ENCODE measurements at regions of chr1 and their contacts with region 1.

Region 1: DNA sequence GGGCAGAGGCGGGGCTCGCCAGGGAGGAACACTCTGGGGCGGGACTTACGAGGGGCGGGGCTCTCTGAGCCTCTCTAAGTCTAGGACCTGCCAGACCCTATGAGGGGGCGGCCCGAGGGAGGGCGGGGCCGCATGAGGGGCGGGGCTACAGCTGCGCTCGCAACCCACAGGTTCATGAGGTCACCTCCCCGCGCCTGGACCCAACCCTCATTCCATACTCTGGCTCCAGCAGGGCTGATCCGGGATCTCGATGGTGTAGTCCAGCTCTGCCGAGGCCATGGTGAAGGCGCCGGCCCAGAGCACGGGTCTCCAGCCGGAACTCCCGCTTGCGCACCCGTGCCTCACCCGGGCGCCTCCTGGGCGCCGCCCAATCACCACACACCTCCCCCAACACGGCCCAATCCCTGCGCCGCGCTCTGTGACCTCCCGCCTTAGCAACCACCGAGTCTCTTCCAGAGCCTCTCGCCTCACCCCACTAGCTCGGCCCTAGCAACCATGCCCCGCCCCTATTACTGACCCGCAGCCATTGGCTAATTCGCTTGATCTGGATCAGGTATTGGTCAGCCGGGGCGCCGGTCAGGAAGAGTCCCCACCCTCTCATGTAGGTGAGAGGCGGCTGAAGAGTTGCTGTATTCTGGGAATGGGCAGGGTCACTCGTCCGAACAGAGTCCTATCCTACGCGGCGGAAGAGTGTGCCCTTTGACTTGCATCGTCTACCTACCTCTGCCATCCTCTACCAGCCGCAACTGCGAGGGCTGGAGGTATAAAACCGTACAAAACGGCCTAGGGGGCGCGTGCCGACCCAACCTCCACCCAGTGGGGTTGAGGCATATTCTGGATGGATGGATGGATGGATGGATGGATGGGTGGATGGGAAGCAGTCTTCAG is at the starts of genes ARMH1 and TMEM53:
- DNase-seq: peak; percentile 96 to 98 (median 97)
- H3K4me3 ChIP-seq: peak within 1 kb of the TSS; percentile 62 to 95
- H3K4me3 Mint-ChIP-seq: peak within 1 kb of the TSS; percentile 89 to 95 (median 90)
- H3K27ac ChIP-seq: peak within 1 kb of the TSS; percentile 74
- H3K27ac Mint-ChIP-seq: peak within 1 kb of the TSS; percentile 87 to 94 (median 93)
- H3K4me1 ChIP-seq: peaks cover 25% of the 10 kb centered on the region
- H3K4me1 Mint-ChIP-seq: peaks cover 11 to 31% (median 23%) of the 10 kb centered on the region in 4 donors
- H3K27me3 ChIP-seq: no peaks in the 10 kb centered on the region
- H3K27me3 Mint-ChIP-seq: no peaks in the 10 kb centered on the region
- total RNA-seq, gene ARMH1: 64.0 to 74.5 TPM
- total RNA-seq, gene TMEM53: 1.7 to 2.2 TPM

Region 2: DNA sequence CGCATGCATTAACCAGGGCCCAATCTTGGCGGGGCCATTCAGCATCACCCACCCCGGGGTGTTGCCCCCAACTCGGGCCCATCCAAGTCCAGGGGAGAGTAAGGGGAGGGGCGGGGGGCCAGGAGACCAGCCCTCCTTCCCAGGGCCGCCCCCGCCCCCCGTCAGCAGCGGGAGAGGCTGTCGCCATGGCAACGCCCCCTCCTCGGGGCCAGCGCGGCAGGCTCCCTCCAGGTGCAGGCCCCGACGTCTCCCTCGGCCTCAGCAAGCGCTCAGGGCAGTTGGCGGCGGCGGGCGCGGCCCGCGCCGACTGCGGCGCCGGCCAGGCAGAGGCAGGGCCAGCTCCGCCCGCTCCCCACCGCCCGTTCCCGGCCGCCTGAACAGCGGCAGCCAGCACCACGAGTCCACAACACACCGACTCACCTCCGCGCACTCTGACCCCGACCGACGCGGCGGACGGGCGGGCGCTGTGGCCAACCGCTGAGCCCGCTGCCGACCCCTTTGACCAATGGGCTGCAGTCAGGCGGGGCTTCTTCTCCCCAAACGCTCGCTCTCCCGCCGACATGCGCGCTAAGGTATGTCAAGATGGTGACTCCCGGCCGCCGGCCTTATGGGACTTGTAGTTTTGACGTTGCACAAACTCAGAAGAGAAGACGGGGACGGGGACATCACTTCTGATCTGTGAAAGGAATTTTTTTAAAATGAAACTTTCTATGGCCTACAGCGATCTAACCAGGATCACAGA is 319.3 kb before region 1 on chr1 and contains the start of gene ERI3:
- CTCF ChIA-PET with region 1: no interaction called
- POLR2A ChIA-PET with region 1: no interaction called
- intact Hi-C with region 1: loop called (anchors 1 kb)
- DNase-seq: peak; percentile 95 to 97 (median 96)
- H3K4me3 ChIP-seq: peak within 1 kb of the TSS; percentile 31 to 72
- H3K4me3 Mint-ChIP-seq: peak within 1 kb of the TSS; percentile 92 to 100 (median 96)
- H3K27ac ChIP-seq: peak within 1 kb of the TSS; percentile 70
- H3K27ac Mint-ChIP-seq: peak within 1 kb of the TSS; percentile 70 to 96 (median 95)
- H3K4me1 ChIP-seq: peaks cover 25% of the 10 kb centered on the region
- H3K4me1 Mint-ChIP-seq: peaks cover 12 to 37% (median 25%) of the 10 kb centered on the region in 4 donors
- H3K27me3 ChIP-seq: no peaks in the 10 kb centered on the region
- H3K27me3 Mint-ChIP-seq: no peaks in the 10 kb centered on the region
- total RNA-seq, gene ERI3: 26.4 to 29.6 TPM

Region 3: DNA sequence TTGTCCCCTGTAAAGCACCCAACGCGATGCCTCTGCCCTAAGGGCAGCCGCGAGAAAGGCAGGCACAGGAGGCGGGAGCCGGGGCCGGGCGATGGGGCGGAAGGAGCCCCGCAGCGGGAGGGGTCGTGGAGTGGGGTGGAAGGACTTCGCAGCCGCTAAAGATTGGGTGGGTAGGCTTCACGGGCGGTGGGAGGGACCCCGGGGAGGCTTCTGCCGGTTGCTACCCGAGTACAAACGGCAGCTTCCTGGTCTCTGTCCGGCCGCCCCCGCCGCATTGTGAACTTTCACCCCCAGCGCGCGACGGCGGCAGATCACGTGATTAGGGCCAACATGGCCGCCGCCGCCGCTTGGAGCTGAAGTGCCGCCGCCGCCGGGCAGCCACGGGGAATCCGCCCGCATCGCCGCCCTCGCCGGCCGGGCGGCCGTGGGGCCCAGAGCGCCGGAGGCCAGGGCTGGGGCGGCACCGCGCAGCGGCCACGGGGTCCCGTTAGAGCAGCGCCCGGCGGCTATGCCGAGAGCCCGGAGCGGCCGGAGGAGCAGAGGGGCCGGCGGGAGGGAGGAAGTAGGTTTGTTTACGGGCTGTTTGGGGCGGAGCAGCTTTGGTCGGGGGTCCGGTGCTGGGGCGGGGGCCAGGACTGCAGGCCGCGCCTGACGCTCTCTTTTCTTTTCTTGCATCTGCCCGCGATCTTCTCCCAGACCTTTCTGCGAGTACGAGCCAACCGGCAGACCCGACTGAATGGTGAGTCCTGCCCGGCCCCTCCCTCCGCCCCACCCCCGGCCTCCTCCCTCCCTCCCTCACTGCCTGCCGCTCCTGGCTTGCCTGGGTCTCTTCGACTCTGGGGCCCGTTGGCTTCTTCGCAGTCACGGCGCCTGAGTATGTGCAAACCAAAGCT is 42.5 kb before region 1 on chr1:
- CTCF ChIA-PET with region 1: no interaction called
- POLR2A ChIA-PET with region 1: interaction called, 64 read pairs
- intact Hi-C with region 1: loop called (anchors 1 kb)
- DNase-seq: peak; percentile 86 to 92 (median 88)
- H3K4me3 ChIP-seq: peak overlapping the region; percentile 38 to 65
- H3K4me3 Mint-ChIP-seq: peak overlapping the region; percentile 91 to 97 (median 93)
- H3K27ac ChIP-seq: peak overlapping the region; percentile 85
- H3K27ac Mint-ChIP-seq: peak overlapping the region; percentile 96 to 99 (median 97)
- H3K4me1 ChIP-seq: peaks cover 35% of the 10 kb centered on the region
- H3K4me1 Mint-ChIP-seq: peaks cover 27 to 50% (median 33%) of the 10 kb centered on the region in 4 donors
- H3K27me3 ChIP-seq: no peaks in the 10 kb centered on the region
- H3K27me3 Mint-ChIP-seq: no peaks in the 10 kb centered on the region

Region 4: DNA sequence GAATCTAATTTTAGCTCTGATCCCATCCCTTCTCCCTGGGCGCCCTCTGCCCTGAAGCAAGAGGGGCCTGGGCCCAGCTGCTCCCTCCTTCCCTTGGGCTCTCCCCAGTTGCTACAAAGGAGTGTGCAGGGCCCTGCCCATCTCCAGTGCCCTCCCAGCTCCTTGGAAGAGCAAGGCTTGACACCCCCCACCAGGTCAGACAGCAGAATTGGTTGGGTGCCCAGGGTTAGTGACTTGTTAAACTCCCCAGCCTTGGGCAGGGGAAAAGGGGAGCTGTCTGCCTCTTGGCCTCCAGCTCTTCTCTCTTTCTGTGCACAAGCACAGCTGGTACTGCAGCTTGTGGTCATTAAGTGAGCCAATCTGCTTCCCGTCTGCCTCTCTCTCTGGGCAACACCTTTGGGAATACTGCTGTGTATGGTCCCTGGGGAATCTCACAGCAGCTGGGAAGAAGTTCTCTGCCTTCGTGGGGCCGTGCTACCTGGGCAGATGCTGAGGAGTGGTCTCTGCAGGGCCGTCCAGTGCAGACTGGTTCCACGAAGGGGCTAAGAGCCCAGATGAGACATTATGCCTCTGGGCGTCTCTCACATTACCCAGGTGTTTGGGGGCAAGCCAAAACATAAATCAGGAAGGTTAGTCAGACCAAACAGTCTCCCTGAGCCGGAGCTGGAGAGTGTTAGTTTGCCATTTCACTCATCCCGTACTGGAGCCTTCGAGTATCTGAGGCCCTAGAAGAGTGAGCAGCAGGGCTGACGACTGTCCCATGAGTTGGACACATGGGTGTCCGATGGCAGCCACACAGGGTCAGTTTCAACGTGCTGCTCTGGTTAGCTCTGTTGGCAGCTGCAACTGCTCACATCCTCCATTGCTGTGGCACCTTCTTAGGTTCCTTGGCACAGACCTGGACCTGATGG is 37.4 kb before region 1 on chr1:
- CTCF ChIA-PET with region 1: no interaction called
- POLR2A ChIA-PET with region 1: interaction called, 64 read pairs
- intact Hi-C with region 1: loop called (anchors 1 kb)
- DNase-seq: no peak
- H3K4me3 ChIP-seq: no peak overlapping the region
- H3K4me3 Mint-ChIP-seq: no peak overlapping the region
- H3K27ac ChIP-seq: no peak overlapping the region
- H3K27ac Mint-ChIP-seq: peak overlapping the region in 1 of 7 donors; percentile 27
- H3K4me1 ChIP-seq: peaks cover 27% of the 10 kb centered on the region
- H3K4me1 Mint-ChIP-seq: peaks cover 17 to 44% (median 27%) of the 10 kb centered on the region in 4 donors
- H3K27me3 ChIP-seq: no peaks in the 10 kb centered on the region
- H3K27me3 Mint-ChIP-seq: no peaks in the 10 kb centered on the region

Region 5: DNA sequence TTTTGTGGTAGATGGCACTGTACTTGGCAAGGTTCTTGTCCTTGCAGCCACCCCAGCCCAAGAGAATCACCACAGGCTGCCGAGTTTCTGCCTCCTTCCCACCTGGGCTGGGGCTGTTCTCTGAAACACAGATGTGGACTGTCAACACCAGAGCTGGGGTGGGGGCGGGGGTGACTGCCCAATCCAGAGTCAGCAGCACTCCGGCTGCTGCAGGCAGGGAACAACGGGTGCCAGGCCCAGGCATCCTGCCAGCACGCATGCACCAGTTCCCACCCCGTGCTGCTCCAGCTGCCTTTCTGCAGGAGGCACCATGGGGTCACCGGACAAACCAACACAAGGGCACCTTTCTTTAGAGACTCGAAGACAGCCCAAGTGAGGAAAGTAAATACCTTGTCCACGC is 14.2 kb before region 1 on chr1:
- CTCF ChIA-PET with region 1: interaction called, 16 read pairs
- POLR2A ChIA-PET with region 1: interaction called, 3 read pairs
- intact Hi-C with region 1: no loop called
- DNase-seq: no peak
- H3K4me3 ChIP-seq: no peak overlapping the region
- H3K4me3 Mint-ChIP-seq: no peak overlapping the region
- H3K27ac ChIP-seq: no peak overlapping the region
- H3K27ac Mint-ChIP-seq: no peak overlapping the region
- H3K4me1 ChIP-seq: peaks cover 10% of the 10 kb centered on the region
- H3K4me1 Mint-ChIP-seq: peaks cover 12 to 15% (median 14%) of the 10 kb centered on the region in 4 donors
- H3K27me3 ChIP-seq: no peaks in the 10 kb centered on the region
- H3K27me3 Mint-ChIP-seq: no peaks in the 10 kb centered on the region

Region 6: GRCh38 chr1:44696789-44697345 is 22.5 kb after region 1 on chr1:
- CTCF ChIA-PET with region 1: interaction called, 4 read pairs
- POLR2A ChIA-PET with region 1: interaction called, 12 read pairs
- intact Hi-C with region 1: no loop called
- DNase-seq: peak in 2 of 5 donors; percentile 29 to 43
- H3K4me3 ChIP-seq: no peak overlapping the region
- H3K4me3 Mint-ChIP-seq: peak overlapping the region in 4 of 8 donors; percentile 29 to 83 (median 52)
- H3K27ac ChIP-seq: no peak overlapping the region
- H3K27ac Mint-ChIP-seq: peak overlapping the region; percentile 27 to 88 (median 84)
- H3K4me1 ChIP-seq: peaks cover 12% of the 10 kb centered on the region
- H3K4me1 Mint-ChIP-seq: peaks cover 4 to 19% (median 11%) of the 10 kb centered on the region in 4 donors
- H3K27me3 ChIP-seq: no peaks in the 10 kb centered on the region
- H3K27me3 Mint-ChIP-seq: no peaks in the 10 kb centered on the region

Region 7: GRCh38 chr1:44985747-44986359 is 311.5 kb after region 1 on chr1:
- CTCF ChIA-PET with region 1: no interaction called
- POLR2A ChIA-PET with region 1: no interaction called
- intact Hi-C with region 1: loop called (anchors 1 kb)
- DNase-seq: no peak
- H3K4me3 ChIP-seq: peak overlapping the region; percentile 67 to 70
- H3K4me3 Mint-ChIP-seq: peak overlapping the region; percentile 98 to 100 (median 99)
- H3K27ac ChIP-seq: peak overlapping the region; percentile 59
- H3K27ac Mint-ChIP-seq: peak overlapping the region; percentile 34 to 99 (median 96)
- H3K4me1 ChIP-seq: peaks cover 11% of the 10 kb centered on the region
- H3K4me1 Mint-ChIP-seq: peaks cover 15 to 26% (median 21%) of the 10 kb centered on the region in 4 donors
- H3K27me3 ChIP-seq: no peaks in the 10 kb centered on the region
- H3K27me3 Mint-ChIP-seq: no peaks in the 10 kb centered on the region

Measured in CD4-positive, alpha-beta memory T cell (primary cell).